Activated naive CD4-positive, alpha-beta T cell treated with anti-CD3 and anti-CD28 coated beads for 36 hours (primary cell): ENCODE measurements at regions of chrX and their contacts with region 1.

Region 1: DNA sequence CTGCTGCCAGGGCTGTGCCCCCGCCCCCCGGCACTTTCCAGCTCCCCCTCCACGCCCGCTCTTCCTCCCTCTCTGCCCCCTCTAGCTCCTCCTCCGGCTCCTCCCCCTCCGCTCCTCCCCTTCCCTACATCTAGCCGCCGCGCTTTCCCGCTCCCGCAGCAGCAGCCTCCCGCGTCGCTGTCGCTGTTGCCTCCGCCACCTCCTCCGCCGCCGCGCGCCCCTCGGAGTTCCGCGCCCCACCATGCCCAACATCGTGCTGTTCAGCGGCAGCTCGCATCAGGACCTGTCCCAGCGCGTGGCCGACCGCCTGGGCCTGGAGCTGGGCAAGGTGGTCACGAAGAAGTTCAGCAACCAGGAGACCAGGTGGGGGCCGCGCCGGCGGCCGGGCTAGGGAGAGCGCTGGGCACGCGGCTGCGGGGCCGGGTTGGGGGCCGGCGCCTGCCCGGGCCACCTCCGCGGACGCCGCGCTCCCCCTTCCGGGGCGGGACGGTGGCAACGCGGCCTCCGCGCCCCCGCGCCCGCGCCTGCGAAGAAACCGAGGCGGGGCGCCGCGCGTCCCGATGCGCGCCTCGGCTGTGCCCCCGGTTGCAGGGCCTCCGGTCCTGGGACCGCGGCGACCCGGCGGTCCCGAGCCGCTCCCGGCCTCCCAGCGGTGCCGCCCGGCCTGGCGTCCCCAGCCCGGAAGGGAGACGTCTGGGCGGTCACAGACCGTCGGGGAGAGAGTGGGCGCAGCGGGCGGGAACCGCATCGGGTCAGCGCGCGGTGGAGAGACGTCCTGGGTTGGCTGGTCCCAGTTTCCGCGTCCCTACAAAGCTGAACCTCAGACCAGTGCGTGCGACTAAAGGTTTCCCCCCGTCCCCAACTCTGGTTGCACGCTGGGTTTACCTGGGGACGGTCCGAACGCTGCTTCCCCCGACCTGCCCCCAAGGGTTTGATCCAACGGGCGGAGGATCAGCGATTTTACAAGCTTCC is at the start of gene PRPS2:
- DNase-seq: peak; percentile 80
- H3K4me3 Mint-ChIP-seq: peak within 1 kb of the TSS; percentile 82
- H3K27ac Mint-ChIP-seq: peak within 1 kb of the TSS; percentile 90
- H3K4me1 Mint-ChIP-seq: peaks cover 35% of the 10 kb centered on the region
- H3K27me3 Mint-ChIP-seq: no peaks in the 10 kb centered on the region
- total RNA-seq, gene PRPS2: 171 to 180 TPM

Region 2: GRCh38 chrX:11111038-11111851 is 1680.3 kb before region 1 on chrX and contains the start of gene HCCS:
- CTCF ChIA-PET with region 1: no interaction called
- intact Hi-C with region 1: loop called (anchors 10 kb)
- DNase-seq: peak; percentile 88
- H3K4me3 Mint-ChIP-seq: no peak within 1 kb of the TSS
- H3K27ac Mint-ChIP-seq: peak within 1 kb of the TSS; percentile 93
- H3K4me1 Mint-ChIP-seq: peaks cover 19% of the 10 kb centered on the region
- H3K27me3 Mint-ChIP-seq: no peaks in the 10 kb centered on the region
- total RNA-seq, gene HCCS: 19.2 to 19.5 TPM

Region 3: GRCh38 chrX:12843668-12844279 is 52.2 kb after region 1 on chrX:
- CTCF ChIA-PET with region 1: no interaction called
- intact Hi-C with region 1: loop called (anchors 5 kb)
- DNase-seq: no peak
- H3K4me3 Mint-ChIP-seq: peak overlapping the region; percentile 65
- H3K27ac Mint-ChIP-seq: peak overlapping the region; percentile 93
- H3K4me1 Mint-ChIP-seq: peaks cover 17% of the 10 kb centered on the region
- H3K27me3 Mint-ChIP-seq: no peaks in the 10 kb centered on the region

Region 4: GRCh38 chrX:12894074-12895030 is 102.8 kb after region 1 on chrX:
- CTCF ChIA-PET with region 1: no interaction called
- intact Hi-C with region 1: loop called (anchors 1 kb)
- DNase-seq: peak; percentile 59
- H3K4me3 Mint-ChIP-seq: no peak overlapping the region
- H3K27ac Mint-ChIP-seq: no peak overlapping the region
- H3K4me1 Mint-ChIP-seq: peaks cover 31% of the 10 kb centered on the region
- H3K27me3 Mint-ChIP-seq: no peaks in the 10 kb centered on the region

Region 5: GRCh38 chrX:13110433-13111324 is 319.1 kb after region 1 on chrX:
- CTCF ChIA-PET with region 1: no interaction called
- intact Hi-C with region 1: no loop called
- DNase-seq: no peak
- H3K4me3 Mint-ChIP-seq: no peak overlapping the region
- H3K27ac Mint-ChIP-seq: no peak overlapping the region
- H3K4me1 Mint-ChIP-seq: peaks cover 3% of the 10 kb centered on the region
- H3K27me3 Mint-ChIP-seq: no peaks in the 10 kb centered on the region

Region 6: DNA sequence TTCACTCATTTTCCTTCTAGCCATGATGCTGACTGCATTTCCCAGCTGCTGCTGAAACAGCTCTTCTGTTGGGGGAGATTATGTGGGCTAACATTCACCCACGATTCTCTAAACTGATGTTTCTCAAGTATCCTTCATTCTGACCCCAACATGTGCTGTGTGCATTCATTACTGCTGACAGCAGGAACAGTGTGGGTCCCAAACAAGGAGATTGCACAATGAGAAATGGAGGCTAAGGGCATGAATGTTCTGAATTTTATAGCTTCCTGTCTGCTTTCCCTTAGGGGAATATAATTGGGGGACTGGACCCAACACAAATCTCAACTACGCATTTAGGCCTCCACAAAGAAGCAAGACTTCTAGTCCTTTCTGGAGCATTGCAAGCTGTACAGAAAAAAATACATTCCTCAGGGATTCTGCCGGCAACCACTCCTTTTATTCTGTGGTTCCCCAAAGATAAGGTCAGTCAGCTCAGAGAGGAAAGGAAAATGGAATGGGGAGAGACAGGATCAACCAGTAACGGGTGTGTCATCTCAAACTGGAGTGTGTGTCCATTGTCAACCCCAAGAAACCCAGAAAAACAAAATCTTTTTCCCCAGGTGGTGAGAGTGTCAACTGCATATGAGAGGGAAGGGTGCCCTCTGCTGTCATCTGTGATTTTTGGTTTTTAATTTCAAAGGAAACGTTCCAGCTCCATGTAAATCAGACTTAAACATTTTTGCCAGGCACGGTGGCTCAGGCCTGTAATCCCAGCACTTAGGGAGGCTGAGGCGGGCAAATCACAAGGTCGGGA is 696.4 kb after region 1 on chrX:
- CTCF ChIA-PET with region 1: no interaction called
- intact Hi-C with region 1: loop called (anchors 10 kb)
- DNase-seq: peak; percentile 58
- H3K4me3 Mint-ChIP-seq: no peak overlapping the region
- H3K27ac Mint-ChIP-seq: peak overlapping the region; percentile 68
- H3K4me1 Mint-ChIP-seq: peaks cover 16% of the 10 kb centered on the region
- H3K27me3 Mint-ChIP-seq: no peaks in the 10 kb centered on the region